ENCODE measurements at regions of chr1 and their contacts with region 1.

Region 1: GRCh38 chr1:203861379-203862184 is at the start of gene SNRPE:
- DNase-seq: peak; percentile 99
- H3K4me3 ChIP-seq: peak within 1 kb of the TSS; percentile 76 to 84 (median 78)
- H3K27ac ChIP-seq: peak within 1 kb of the TSS; percentile 58 to 76 (median 68)
- H3K4me1 ChIP-seq: peaks cover 20 to 42% (median 36%) of the 10 kb centered on the region in 4 donors
- H3K27me3 ChIP-seq: no peaks in the 10 kb centered on the region
- CTCF ChIP-seq: peak; percentile 91 to 96 (median 96)
- EP300 ChIP-seq: no peak
- POLR2A ChIP-seq: peak; percentile 12
- total RNA-seq, gene SNRPE: 19.0 to 45.7 (median 35.1) TPM

Region 2: GRCh38 chr1:203440771-203441170 is 420.8 kb before region 1 on chr1:
- intact Hi-C with region 1: no loop called
- DNase-seq: no peak
- H3K4me3 ChIP-seq: no peak overlapping the region
- H3K27ac ChIP-seq: peak overlapping the region in 3 of 4 donors; percentile 11 to 59 (median 52)
- H3K4me1 ChIP-seq: peaks cover 14 to 26% (median 25%) of the 10 kb centered on the region in 4 donors
- H3K27me3 ChIP-seq: no peaks in the 10 kb centered on the region
- CTCF ChIP-seq: peak; percentile 71 to 83 (median 78)
- EP300 ChIP-seq: no peak
- POLR2A ChIP-seq: no peak

Region 3: GRCh38 chr1:203663294-203663693 is 198.3 kb before region 1 on chr1:
- intact Hi-C with region 1: no loop called
- DNase-seq: no peak
- H3K4me3 ChIP-seq: no peak overlapping the region
- H3K27ac ChIP-seq: peak overlapping the region; percentile 81 to 95 (median 91)
- H3K4me1 ChIP-seq: peaks cover 88 to 100% (median 95%) of the 10 kb centered on the region in 4 donors
- H3K27me3 ChIP-seq: no peaks in the 10 kb centered on the region
- CTCF ChIP-seq: peak in 1 of 3 experiments; percentile 17
- EP300 ChIP-seq: no peak
- POLR2A ChIP-seq: no peak

Region 4: GRCh38 chr1:204072931-204073836 is 211.6 kb after region 1 on chr1 and contains the start of gene SOX13:
- intact Hi-C with region 1: loop called (anchors 10 kb)
- DNase-seq: peak; percentile 95
- H3K4me3 ChIP-seq: peak within 1 kb of the TSS; percentile 63 to 77 (median 65)
- H3K27ac ChIP-seq: peak within 1 kb of the TSS; percentile 73 to 86 (median 80)
- H3K4me1 ChIP-seq: peaks cover 16 to 58% (median 57%) of the 10 kb centered on the region in 4 donors
- H3K27me3 ChIP-seq: peaks cover 0 to 45% (median 6%) of the 10 kb centered on the region in 4 donors
- CTCF ChIP-seq: peak in 1 of 3 experiments; percentile 12
- EP300 ChIP-seq: no peak
- POLR2A ChIP-seq: peak; percentile 60
- total RNA-seq, gene SOX13: 13.3 to 25.6 (median 21.7) TPM

Region 5: DNA sequence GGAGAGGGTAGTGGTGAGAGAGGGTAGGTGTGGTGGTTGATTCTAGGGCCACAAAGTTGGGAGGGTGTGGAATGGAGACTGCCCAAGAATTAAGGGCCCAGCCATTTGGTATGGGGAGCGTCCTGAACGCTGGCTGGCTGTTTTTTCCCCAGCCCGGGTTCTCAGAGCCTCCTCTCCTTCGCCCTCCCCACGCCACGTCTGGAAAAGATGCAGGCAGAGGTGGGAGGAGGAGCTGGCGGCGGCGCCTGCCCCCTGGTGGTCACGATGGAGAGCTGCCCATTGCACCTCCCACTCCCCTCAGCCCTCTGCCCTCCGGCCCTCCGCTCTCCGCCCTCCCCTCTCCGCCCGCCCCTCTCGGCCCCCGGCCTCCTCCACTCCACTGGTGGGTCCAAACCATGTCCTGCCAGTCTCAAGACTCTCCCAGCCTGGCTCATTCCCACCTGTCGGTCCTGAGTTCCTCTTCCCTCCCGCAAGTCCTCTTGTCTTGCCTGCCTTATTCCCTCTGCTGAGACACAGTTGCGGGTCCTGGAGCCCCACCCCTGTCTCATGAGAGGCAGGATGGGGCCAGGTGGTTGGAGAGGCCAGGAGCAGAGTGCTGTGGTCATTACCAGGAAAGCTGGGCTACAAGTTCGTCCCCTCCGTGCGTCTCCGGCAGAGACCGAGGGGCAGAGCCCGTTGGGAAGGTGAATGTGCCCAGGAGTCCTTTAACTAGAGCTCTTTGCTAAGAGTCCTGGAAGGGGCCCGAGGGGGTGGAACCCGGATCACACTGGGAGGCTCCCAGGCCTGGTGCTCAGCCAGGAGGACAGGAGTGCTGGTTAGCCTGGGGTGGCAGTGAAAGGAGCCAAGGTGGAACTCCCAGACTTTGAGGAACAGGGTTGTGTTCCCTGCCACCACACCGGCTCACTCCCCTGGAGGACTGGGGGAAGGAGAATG is 267.6 kb after region 1 on chr1:
- intact Hi-C with region 1: loop called (anchors 2 kb)
- DNase-seq: no peak
- H3K4me3 ChIP-seq: peak overlapping the region; percentile 19 to 41 (median 26)
- H3K27ac ChIP-seq: peak overlapping the region; percentile 17 to 71 (median 32)
- H3K4me1 ChIP-seq: peaks cover 22 to 57% (median 54%) of the 10 kb centered on the region in 4 donors
- H3K27me3 ChIP-seq: no peaks in the 10 kb centered on the region
- CTCF ChIP-seq: peak; percentile 80 to 92 (median 88)
- EP300 ChIP-seq: no peak
- POLR2A ChIP-seq: no peak

Region 6: GRCh38 chr1:204207136-204207616 is 345.6 kb after region 1 on chr1:
- intact Hi-C with region 1: loop called (anchors 5 kb)
- DNase-seq: no peak
- H3K4me3 ChIP-seq: no peak overlapping the region
- H3K27ac ChIP-seq: no peak overlapping the region
- H3K4me1 ChIP-seq: peaks cover 0 to 8% (median 3%) of the 10 kb centered on the region in 4 donors
- H3K27me3 ChIP-seq: peaks cover 0 to 51% (median 6%) of the 10 kb centered on the region in 4 donors
- CTCF ChIP-seq: peak; percentile 65 to 91 (median 75)
- EP300 ChIP-seq: no peak
- POLR2A ChIP-seq: no peak